Heart right ventricle (tissue), 16 donors: ENCODE measurements at regions of chr5 and their contacts with region 1.

Region 1: DNA sequence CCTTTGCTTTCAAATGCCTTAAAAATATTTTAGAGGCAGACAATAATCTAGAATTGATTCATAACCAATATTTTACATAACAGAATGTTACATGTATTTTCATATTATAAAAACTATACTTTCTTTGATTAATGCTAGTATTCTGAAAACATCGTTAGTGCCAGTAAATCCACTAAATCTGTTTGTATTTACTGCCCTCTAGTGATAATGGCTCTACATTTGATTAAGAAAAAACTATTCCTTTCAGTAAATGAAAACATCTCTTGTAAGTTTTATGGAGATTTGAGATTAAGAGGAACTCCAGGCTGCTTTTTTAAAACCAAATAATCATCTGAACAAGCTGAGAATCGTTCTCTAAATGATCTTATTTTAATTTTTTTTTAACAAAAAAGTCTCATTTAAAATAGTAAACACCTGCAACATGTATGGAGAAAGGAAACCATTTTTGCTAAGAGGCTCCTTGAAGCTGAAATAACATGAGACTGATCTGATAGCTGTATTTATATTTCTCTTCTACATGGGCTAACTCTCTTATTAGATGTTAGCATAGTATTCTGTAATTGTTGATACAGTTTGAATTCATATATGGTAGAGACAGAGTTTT is 424.7 kb downstream of the RAB3C start:
- DNase-seq: no peak
- ATAC-seq: no peak
- H3K4me3 ChIP-seq: no peak overlapping the region
- H3K27ac ChIP-seq: no peak overlapping the region
- H3K4me1 ChIP-seq: peaks cover 0 to 10% (median 4%) of the 10 kb centered on the region in 9 donors
- H3K27me3 ChIP-seq: no peaks in the 10 kb centered on the region
- CTCF ChIP-seq: peak in 8 of 9 donors; percentile 26 to 70 (median 58)

Region 2: DNA sequence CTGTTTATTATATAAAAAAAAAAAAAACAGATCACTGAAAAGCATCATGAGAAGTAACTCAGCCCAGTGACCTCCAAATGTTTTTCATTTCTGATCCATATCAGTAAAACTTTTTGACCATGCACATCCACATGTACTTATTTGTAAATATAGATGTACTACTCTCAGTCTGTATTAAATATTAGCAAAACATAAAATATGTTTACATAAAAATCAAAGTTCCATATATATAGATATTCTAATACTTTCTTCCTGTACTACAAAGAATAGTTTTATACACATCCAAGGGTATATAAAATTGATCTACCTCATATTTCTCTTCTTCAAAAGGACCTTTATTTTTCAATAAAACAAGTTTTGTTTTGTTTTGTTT is 115.6 kb before region 1 on chr5:
- intact Hi-C with region 1: loop called (anchors 2 to 10 kb)
- DNase-seq: no peak
- ATAC-seq: no peak
- H3K4me3 ChIP-seq: no peak overlapping the region
- H3K27ac ChIP-seq: peak overlapping the region in 4 of 10 donors; percentile 46 to 73 (median 52)
- H3K4me1 ChIP-seq: peaks cover 0 to 23% (median 5%) of the 10 kb centered on the region in 9 donors
- H3K27me3 ChIP-seq: no peaks in the 10 kb centered on the region
- CTCF ChIP-seq: peak in 2 of 9 donors; percentile 6 to 23

Region 3: DNA sequence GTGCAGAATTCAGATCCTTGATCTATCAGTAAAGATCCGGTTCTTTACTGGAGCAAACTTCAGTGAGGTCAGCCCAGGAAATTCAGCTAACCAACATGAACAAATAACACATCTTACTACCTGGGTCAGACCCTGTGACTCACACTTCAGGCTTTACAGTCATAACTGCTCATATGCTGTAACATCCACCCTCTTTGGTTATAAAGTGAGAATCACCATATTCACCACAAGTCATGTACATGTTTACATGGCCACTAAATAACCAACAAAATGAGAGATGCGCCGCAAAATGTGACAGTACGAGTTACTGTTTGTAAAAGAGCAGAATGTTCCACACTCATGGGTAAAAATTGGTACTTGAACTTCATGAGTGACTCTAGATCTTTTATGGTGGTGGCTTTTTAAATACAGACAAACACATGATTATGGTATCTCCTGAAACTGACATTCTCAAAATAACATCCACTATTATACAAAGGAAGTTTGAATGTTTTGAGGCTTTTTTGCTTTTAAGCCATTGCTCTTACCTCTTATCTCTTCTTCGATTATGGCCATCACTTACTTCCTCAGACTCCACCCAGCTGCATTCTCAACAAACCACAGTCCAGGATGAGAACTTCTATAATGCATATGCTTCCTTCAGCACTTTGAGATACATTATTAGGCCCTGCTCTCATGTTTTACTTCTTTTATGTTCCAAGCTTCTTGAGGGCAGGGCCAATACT is 91.9 kb after region 1 on chr5:
- intact Hi-C with region 1: no loop called
- DNase-seq: no peak
- ATAC-seq: peak in 3 of 8 donors; percentile 19 to 34 (median 27)
- H3K4me3 ChIP-seq: no peak overlapping the region
- H3K27ac ChIP-seq: peak overlapping the region in 1 of 10 donors; percentile 27
- H3K4me1 ChIP-seq: peaks cover 0 to 39% (median 10%) of the 10 kb centered on the region in 9 donors
- H3K27me3 ChIP-seq: no peaks in the 10 kb centered on the region
- CTCF ChIP-seq: no peak